Natural killer cell (primary cell): ENCODE measurements at regions of chr16 and their contacts with region 1.

Region 1: GRCh38 chr16:30335598-30336474 is 19.3 kb downstream of the CD2BP2 start:
- DNase-seq: peak in 1 of 2 donors; percentile 67
- ATAC-seq: peak in 1 of 3 donors; percentile 10
- H3K4me3 ChIP-seq: peak overlapping the region; percentile 45
- H3K4me3 Mint-ChIP-seq: peak overlapping the region; percentile 92
- H3K27ac ChIP-seq: peak overlapping the region; percentile 65
- H3K27ac Mint-ChIP-seq: peak overlapping the region; percentile 86 to 89
- H3K4me1 ChIP-seq: peaks cover 17% of the 10 kb centered on the region
- H3K4me1 Mint-ChIP-seq: peaks cover 16% of the 10 kb centered on the region in 2 donors
- H3K27me3 ChIP-seq: no peaks in the 10 kb centered on the region
- H3K27me3 Mint-ChIP-seq: no peaks in the 10 kb centered on the region
- CTCF ChIP-seq: no peak

Region 2: DNA sequence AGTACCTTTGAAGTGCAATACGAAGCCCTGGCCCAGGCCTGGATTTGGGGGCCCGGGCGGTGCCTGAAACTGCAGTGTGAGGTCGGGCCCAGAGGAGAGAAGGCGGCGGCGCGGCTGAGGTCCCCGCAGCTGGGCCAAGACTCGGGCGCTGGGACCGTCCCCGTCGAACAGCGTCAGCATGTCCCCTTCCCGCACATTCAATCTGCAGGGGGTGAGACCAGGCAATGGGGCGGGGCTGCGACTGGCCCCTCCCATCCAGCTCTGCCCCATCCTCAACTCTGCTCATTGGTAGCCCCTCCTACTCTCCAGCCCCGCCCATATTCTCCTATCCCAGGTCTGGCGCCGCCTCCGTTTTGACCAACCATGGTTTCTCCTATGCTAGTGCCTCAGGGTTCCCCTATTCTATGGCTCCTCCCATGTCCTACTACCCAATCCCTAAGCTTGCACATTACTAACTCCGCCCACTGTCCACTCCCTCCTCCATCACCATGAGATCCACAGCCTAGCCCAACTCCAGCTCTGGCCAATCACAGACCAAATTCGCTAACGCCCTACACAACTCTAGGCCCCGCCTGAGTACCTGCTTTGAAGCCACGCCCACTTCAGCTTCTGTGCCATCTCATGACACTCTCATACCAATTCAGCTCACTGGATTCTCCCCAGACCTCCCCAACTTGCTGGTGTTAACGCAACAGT is 458.4 kb before region 1 on chr16:
- intact Hi-C with region 1: no loop called
- DNase-seq: peak in 1 of 2 donors; percentile 62
- ATAC-seq: peak; percentile 66 to 75 (median 72)
- H3K4me3 ChIP-seq: no peak overlapping the region
- H3K4me3 Mint-ChIP-seq: peak overlapping the region; percentile 74
- H3K27ac ChIP-seq: no peak overlapping the region
- H3K27ac Mint-ChIP-seq: no peak overlapping the region
- H3K4me1 ChIP-seq: peaks cover 18% of the 10 kb centered on the region
- H3K4me1 Mint-ChIP-seq: peaks cover 7 to 24% of the 10 kb centered on the region in 2 donors
- H3K27me3 ChIP-seq: peaks cover 20% of the 10 kb centered on the region
- H3K27me3 Mint-ChIP-seq: peaks cover 18% of the 10 kb centered on the region in 2 donors
- CTCF ChIP-seq: no peak

Region 3: GRCh38 chr16:30378236-30379204 is 42.7 kb after region 1 on chr16:
- intact Hi-C with region 1: loop called (anchors 2 kb)
- DNase-seq: peak; percentile 98 to 99
- ATAC-seq: peak; percentile 85 to 97 (median 86)
- H3K4me3 ChIP-seq: peak overlapping the region; percentile 64
- H3K4me3 Mint-ChIP-seq: peak overlapping the region; percentile 97
- H3K27ac ChIP-seq: peak overlapping the region; percentile 99
- H3K27ac Mint-ChIP-seq: peak overlapping the region; percentile 99 to 100
- H3K4me1 ChIP-seq: peaks cover 70% of the 10 kb centered on the region
- H3K4me1 Mint-ChIP-seq: peaks cover 53 to 60% of the 10 kb centered on the region in 2 donors
- H3K27me3 ChIP-seq: no peaks in the 10 kb centered on the region
- H3K27me3 Mint-ChIP-seq: no peaks in the 10 kb centered on the region
- CTCF ChIP-seq: no peak

Region 4: GRCh38 chr16:30417529-30418349 is 81.9 kb after region 1 on chr16:
- intact Hi-C with region 1: no loop called
- DNase-seq: peak; percentile 85 to 98
- ATAC-seq: peak; percentile 86 to 97 (median 88)
- H3K4me3 ChIP-seq: peak overlapping the region; percentile 40
- H3K4me3 Mint-ChIP-seq: peak overlapping the region; percentile 67
- H3K27ac ChIP-seq: peak overlapping the region; percentile 77
- H3K27ac Mint-ChIP-seq: peak overlapping the region; percentile 51 to 81
- H3K4me1 ChIP-seq: peaks cover 13% of the 10 kb centered on the region
- H3K4me1 Mint-ChIP-seq: peaks cover 11 to 14% of the 10 kb centered on the region in 2 donors
- H3K27me3 ChIP-seq: no peaks in the 10 kb centered on the region
- H3K27me3 Mint-ChIP-seq: no peaks in the 10 kb centered on the region
- CTCF ChIP-seq: no peak